ENCODE measurements at regions of chr15 and their contacts with region 1.

Region 1: GRCh38 chr15:48800811-48801455 is 9.9 kb downstream of the CEP152 start:
- DNase-seq: no peak
- CTCF ChIP-seq: peak; percentile 29

Region 2: DNA sequence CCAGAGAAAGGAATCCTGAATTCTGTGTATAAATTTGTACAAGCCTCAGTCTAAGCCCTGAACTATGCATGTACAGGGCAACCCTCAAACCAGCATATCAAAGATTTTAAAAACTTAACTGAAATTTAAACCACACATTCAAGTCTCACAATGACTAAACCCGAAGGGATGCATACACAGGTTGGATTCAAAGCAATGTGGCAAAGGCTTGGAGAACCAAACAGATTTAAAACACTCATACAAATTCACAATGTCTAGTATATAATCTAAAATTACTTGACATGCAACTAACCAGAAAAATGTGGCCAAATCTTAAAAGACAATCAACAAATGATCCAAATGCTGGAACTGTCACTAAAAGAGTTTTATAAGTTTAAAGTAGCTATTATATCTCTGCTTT is 26.4 kb before region 1 on chr15:
- CTCF ChIA-PET with region 1: interaction called, 11 read pairs
- POLR2A ChIA-PET with region 1: no interaction called
- DNase-seq: no peak
- CTCF ChIP-seq: no peak

Region 3: GRCh38 chr15:48785195-48785594 is 15.7 kb before region 1 on chr15:
- CTCF ChIA-PET with region 1: interaction called, 10 read pairs
- POLR2A ChIA-PET with region 1: no interaction called
- DNase-seq: no peak
- CTCF ChIP-seq: no peak

Region 4: DNA sequence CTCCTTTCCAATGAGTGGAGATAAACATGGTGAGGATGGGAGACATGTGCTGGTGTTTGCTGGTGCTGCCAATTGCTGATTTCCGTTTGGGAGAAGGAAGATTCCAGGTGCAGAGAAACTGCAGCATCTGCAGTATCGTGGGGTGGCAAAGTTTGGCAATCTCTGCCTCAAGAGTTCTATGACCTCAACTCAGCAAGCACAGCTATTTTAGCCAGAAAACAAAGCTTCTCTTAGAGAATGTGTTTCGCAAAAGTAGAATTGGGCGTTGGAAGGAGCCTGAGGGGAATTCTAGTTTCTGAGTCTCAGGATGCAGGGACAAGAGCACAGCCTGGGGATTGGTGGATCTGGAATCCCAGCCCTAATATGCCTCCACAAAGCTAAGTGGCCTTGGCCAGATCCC is 181.0 kb after region 1 on chr15:
- CTCF ChIA-PET with region 1: no interaction called
- POLR2A ChIA-PET with region 1: no interaction called
- DNase-seq: no peak
- CTCF ChIP-seq: no peak